ENCODE measurements at regions of chr22 and their contacts with region 1.

Region 1: GRCh38 chr22:32265882-32266767 is 11.0 kb upstream of the SLC5A4 start:
- DNase-seq: peak; percentile 57 to 61 (median 58)
- H3K4me3 ChIP-seq: no peak overlapping the region
- H3K4me3 Mint-ChIP-seq: peak overlapping the region in 2 of 8 donors; percentile 32 to 76
- H3K27ac ChIP-seq: no peak overlapping the region
- H3K27ac Mint-ChIP-seq: peak overlapping the region in 1 of 7 donors; percentile 62
- H3K4me1 ChIP-seq: no peaks in the 10 kb centered on the region
- H3K4me1 Mint-ChIP-seq: peaks cover 4 to 10% (median 8%) of the 10 kb centered on the region in 4 donors
- H3K27me3 ChIP-seq: no peaks in the 10 kb centered on the region
- H3K27me3 Mint-ChIP-seq: peaks cover 6% of the 10 kb centered on the region in 2 donors

Region 2: DNA sequence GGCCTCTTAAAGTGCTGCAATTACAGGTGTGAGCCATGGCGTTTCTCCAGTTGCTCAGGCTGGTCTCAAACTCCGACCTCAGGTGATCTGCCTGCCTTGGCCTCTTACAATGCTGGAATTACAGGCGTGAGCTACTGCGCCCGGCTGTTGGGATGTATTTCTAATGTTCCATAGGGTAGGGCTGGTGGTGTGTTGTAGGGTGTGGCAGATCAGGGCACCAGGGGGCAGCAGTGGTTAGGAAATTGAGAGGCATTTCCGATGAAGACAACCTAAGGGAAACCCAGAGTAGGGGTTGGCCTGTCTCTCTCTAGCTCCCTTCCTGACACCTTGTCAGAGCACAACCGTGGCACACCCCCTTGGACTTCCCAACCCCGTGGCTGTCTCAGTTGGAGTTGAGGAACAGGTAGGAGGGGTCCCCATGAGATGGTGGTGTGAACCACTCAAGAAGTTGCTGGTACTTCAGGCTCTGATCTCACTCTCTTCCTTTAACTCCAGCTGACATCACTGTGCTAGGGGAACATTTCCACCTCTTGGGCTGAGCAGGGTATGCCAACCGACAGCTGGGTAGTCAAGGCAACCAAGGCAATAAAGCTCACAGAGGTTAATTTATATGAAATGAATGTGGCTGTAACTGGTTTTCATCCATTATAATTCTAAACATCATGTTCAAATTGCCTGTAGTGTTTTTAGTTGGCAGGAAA is 288.8 kb before region 1 on chr22:
- CTCF ChIA-PET with region 1: interaction called, 31 read pairs
- POLR2A ChIA-PET with region 1: no interaction called
- intact Hi-C with region 1: loop called (anchors 1 kb)
- DNase-seq: peak; percentile 67 to 73 (median 70)
- H3K4me3 ChIP-seq: no peak overlapping the region
- H3K4me3 Mint-ChIP-seq: no peak overlapping the region
- H3K27ac ChIP-seq: no peak overlapping the region
- H3K27ac Mint-ChIP-seq: peak overlapping the region in 1 of 7 donors; percentile 69
- H3K4me1 ChIP-seq: no peaks in the 10 kb centered on the region
- H3K4me1 Mint-ChIP-seq: peaks cover 0 to 4% (median 1%) of the 10 kb centered on the region in 4 donors
- H3K27me3 ChIP-seq: no peaks in the 10 kb centered on the region
- H3K27me3 Mint-ChIP-seq: no peaks in the 10 kb centered on the region

Region 3: GRCh38 chr22:32103658-32104315 is 162.3 kb before region 1 on chr22:
- CTCF ChIA-PET with region 1: interaction called, 86 read pairs
- POLR2A ChIA-PET with region 1: no interaction called
- intact Hi-C with region 1: no loop called
- DNase-seq: peak in 4 of 5 donors; percentile 32 to 38 (median 36)
- H3K4me3 ChIP-seq: no peak overlapping the region
- H3K4me3 Mint-ChIP-seq: no peak overlapping the region
- H3K27ac ChIP-seq: no peak overlapping the region
- H3K27ac Mint-ChIP-seq: no peak overlapping the region
- H3K4me1 ChIP-seq: no peaks in the 10 kb centered on the region
- H3K4me1 Mint-ChIP-seq: no peaks in the 10 kb centered on the region
- H3K27me3 ChIP-seq: no peaks in the 10 kb centered on the region
- H3K27me3 Mint-ChIP-seq: peaks cover 13 to 14% of the 10 kb centered on the region in 2 donors

Region 4: DNA sequence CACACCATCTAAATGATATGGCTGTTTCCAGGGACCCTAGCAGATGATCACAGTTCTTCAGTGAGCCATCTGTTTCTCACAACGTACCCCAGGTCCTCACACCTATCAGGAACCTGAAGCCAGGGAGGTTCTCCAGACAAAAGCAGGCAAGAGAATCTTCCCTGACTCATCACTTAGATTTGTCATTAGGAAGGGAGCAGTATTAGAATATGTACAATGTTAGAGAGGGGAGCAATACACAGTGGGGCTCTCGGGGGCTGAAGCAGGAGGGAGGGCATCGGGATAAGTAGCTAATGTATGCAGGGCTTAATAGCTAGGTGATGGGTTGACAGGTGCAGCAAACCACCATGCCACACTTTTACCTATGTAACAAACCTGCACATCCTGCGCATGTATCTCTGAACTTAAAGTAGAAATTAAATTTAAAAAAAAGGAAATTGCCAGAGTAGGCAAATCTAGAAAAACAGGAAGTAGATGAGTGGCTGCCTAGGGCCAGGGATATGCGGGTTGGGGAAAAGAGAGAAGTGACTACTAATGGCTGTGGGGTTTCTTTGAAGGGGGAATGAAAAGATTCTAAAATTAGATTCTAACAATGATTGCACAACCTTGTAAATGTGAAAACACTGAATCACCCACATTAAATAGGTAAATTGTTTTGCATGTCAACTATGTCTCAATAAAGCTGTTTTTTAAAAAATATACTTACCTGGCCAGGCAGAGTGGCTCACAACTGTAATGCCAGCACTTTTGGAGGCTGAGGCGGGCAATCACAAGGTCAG is 121.4 kb before region 1 on chr22:
- CTCF ChIA-PET with region 1: interaction called, 13 read pairs
- POLR2A ChIA-PET with region 1: no interaction called
- intact Hi-C with region 1: loop called (anchors 2 kb)
- DNase-seq: peak in 1 of 5 donors; percentile 12
- H3K4me3 ChIP-seq: no peak overlapping the region
- H3K4me3 Mint-ChIP-seq: peak overlapping the region in 5 of 8 donors; percentile 10 to 60 (median 29)
- H3K27ac ChIP-seq: no peak overlapping the region
- H3K27ac Mint-ChIP-seq: peak overlapping the region; percentile 7 to 88 (median 60)
- H3K4me1 ChIP-seq: peaks cover 40% of the 10 kb centered on the region
- H3K4me1 Mint-ChIP-seq: peaks cover 31 to 47% (median 39%) of the 10 kb centered on the region in 4 donors
- H3K27me3 ChIP-seq: no peaks in the 10 kb centered on the region
- H3K27me3 Mint-ChIP-seq: no peaks in the 10 kb centered on the region

Region 5: DNA sequence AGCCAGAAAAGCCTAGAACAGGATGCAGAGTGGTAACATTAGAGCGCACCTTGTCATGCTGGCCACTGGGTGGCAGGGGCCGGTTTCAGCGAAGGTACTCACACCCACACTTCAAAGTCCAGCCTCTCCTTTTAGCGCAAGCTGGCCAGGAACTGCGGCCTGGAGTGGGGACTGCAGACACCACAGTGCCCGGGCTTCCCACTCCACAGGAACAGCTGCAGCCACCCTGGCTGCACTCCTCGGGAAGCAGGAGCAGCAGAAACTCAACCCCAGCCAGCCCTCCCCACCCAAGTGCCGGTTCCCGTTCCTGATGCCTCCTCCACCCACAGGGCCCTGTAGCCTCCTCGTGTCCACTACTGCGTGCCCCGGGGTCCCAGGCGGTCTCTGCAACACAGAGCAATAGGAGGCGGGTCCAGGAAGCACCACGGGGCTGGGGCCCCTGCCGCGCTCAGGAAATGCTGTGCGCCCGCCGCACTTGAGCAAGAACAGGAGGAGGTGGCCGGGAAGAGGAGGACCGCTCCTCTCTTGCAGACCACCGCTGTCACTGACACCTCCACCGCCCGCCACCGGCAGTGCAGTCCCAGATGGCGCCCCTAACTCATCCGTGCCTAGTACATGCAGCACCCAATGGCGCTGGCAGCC is 63.5 kb before region 1 on chr22:
- CTCF ChIA-PET with region 1: interaction called, 18 read pairs
- POLR2A ChIA-PET with region 1: no interaction called
- intact Hi-C with region 1: loop called (anchors 5 kb)
- DNase-seq: peak; percentile 32 to 56 (median 38)
- H3K4me3 ChIP-seq: peak overlapping the region; percentile 44 to 52
- H3K4me3 Mint-ChIP-seq: peak overlapping the region; percentile 81 to 93 (median 88)
- H3K27ac ChIP-seq: peak overlapping the region; percentile 15
- H3K27ac Mint-ChIP-seq: peak overlapping the region in 5 of 7 donors; percentile 50 to 95 (median 74)
- H3K4me1 ChIP-seq: peaks cover 64% of the 10 kb centered on the region
- H3K4me1 Mint-ChIP-seq: peaks cover 29 to 86% (median 62%) of the 10 kb centered on the region in 4 donors
- H3K27me3 ChIP-seq: no peaks in the 10 kb centered on the region
- H3K27me3 Mint-ChIP-seq: peaks cover 0 to 2% of the 10 kb centered on the region in 2 donors

Region 6: DNA sequence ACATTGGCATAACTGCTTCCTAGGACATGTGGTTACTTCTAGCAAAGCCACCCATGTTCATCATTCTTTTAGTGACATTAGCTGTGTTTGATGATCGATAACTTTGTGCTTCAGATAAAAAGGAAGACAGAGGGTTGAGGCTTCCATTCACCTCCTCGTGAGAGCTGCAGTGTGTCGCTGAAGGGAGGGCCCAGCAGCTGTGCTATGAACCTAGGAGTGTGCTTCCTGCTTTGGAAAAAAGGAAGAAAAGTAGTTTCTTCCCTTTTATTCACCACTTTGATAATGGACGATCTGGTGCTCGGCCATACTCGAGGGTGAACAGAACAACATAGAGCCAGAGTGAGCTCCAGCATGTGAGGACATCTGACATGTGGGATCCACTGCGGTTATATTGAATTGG is 55.1 kb before region 1 on chr22:
- CTCF ChIA-PET with region 1: interaction called, 11 read pairs
- POLR2A ChIA-PET with region 1: no interaction called
- intact Hi-C with region 1: no loop called
- DNase-seq: no peak
- H3K4me3 ChIP-seq: no peak overlapping the region
- H3K4me3 Mint-ChIP-seq: no peak overlapping the region
- H3K27ac ChIP-seq: no peak overlapping the region
- H3K27ac Mint-ChIP-seq: no peak overlapping the region
- H3K4me1 ChIP-seq: peaks cover 12% of the 10 kb centered on the region
- H3K4me1 Mint-ChIP-seq: peaks cover 6 to 15% (median 11%) of the 10 kb centered on the region in 4 donors
- H3K27me3 ChIP-seq: no peaks in the 10 kb centered on the region
- H3K27me3 Mint-ChIP-seq: no peaks in the 10 kb centered on the region

Region 7: GRCh38 chr22:32281072-32281471 is 14.9 kb after region 1 on chr22:
- CTCF ChIA-PET with region 1: interaction called, 12 read pairs
- POLR2A ChIA-PET with region 1: no interaction called
- intact Hi-C with region 1: no loop called
- DNase-seq: no peak
- H3K4me3 ChIP-seq: no peak overlapping the region
- H3K4me3 Mint-ChIP-seq: no peak overlapping the region
- H3K27ac ChIP-seq: no peak overlapping the region
- H3K27ac Mint-ChIP-seq: peak overlapping the region in 1 of 7 donors; percentile 33
- H3K4me1 ChIP-seq: no peaks in the 10 kb centered on the region
- H3K4me1 Mint-ChIP-seq: no peaks in the 10 kb centered on the region
- H3K27me3 ChIP-seq: no peaks in the 10 kb centered on the region
- H3K27me3 Mint-ChIP-seq: peaks cover 10 to 19% of the 10 kb centered on the region in 2 donors

Region 8: GRCh38 chr22:32311551-32312071 is 45.5 kb after region 1 on chr22:
- CTCF ChIA-PET with region 1: no interaction called
- POLR2A ChIA-PET with region 1: no interaction called
- intact Hi-C with region 1: no loop called
- DNase-seq: no peak
- H3K4me3 ChIP-seq: no peak overlapping the region
- H3K4me3 Mint-ChIP-seq: no peak overlapping the region
- H3K27ac ChIP-seq: no peak overlapping the region
- H3K27ac Mint-ChIP-seq: no peak overlapping the region
- H3K4me1 ChIP-seq: no peaks in the 10 kb centered on the region
- H3K4me1 Mint-ChIP-seq: no peaks in the 10 kb centered on the region
- H3K27me3 ChIP-seq: no peaks in the 10 kb centered on the region
- H3K27me3 Mint-ChIP-seq: peaks cover 12 to 36% of the 10 kb centered on the region in 2 donors

Region 9: GRCh38 chr22:32325416-32325801 is 59.3 kb after region 1 on chr22:
- CTCF ChIA-PET with region 1: no interaction called
- POLR2A ChIA-PET with region 1: no interaction called
- intact Hi-C with region 1: no loop called
- DNase-seq: no peak
- H3K4me3 ChIP-seq: no peak overlapping the region
- H3K4me3 Mint-ChIP-seq: no peak overlapping the region
- H3K27ac ChIP-seq: no peak overlapping the region
- H3K27ac Mint-ChIP-seq: no peak overlapping the region
- H3K4me1 ChIP-seq: no peaks in the 10 kb centered on the region
- H3K4me1 Mint-ChIP-seq: no peaks in the 10 kb centered on the region
- H3K27me3 ChIP-seq: no peaks in the 10 kb centered on the region
- H3K27me3 Mint-ChIP-seq: peaks cover 4 to 6% of the 10 kb centered on the region in 2 donors

Region 10: DNA sequence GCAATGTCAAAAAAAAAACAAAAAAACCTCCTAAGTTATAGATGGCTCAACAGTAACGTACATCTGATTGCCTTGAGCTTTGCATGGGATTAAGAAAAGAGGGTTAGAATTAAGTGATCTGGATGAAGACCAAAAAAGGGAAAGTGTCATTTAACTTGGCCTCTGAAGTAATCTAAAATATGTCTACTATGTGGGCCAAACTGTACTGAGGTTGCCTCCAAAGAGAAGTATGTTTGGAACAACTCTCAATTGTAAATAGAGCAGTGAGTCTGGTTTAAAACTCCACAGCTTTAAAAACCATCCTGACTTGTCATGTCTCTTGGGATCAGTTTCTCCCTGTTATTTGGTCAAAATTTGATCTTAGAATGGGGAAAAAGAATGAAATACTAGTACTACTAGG is 157.5 kb after region 1 on chr22:
- CTCF ChIA-PET with region 1: no interaction called
- POLR2A ChIA-PET with region 1: no interaction called
- intact Hi-C with region 1: no loop called
- DNase-seq: no peak
- H3K4me3 ChIP-seq: no peak overlapping the region
- H3K4me3 Mint-ChIP-seq: no peak overlapping the region
- H3K27ac ChIP-seq: no peak overlapping the region
- H3K27ac Mint-ChIP-seq: no peak overlapping the region
- H3K4me1 ChIP-seq: no peaks in the 10 kb centered on the region
- H3K4me1 Mint-ChIP-seq: no peaks in the 10 kb centered on the region
- H3K27me3 ChIP-seq: peaks cover 3% of the 10 kb centered on the region
- H3K27me3 Mint-ChIP-seq: peaks cover 29 to 32% of the 10 kb centered on the region in 2 donors

Measured in CD4-positive, alpha-beta memory T cell (primary cell).